ENCODE measurements at regions of chr3 and their contacts with region 1.

Region 1: GRCh38 chr3:194333212-194333980 is 17.7 kb downstream of the CPN2 start:
- DNase-seq: peak; percentile 77 to 87 (median 84)
- H3K4me3 ChIP-seq: peak overlapping the region in 1 of 2 donors; percentile 38
- H3K4me3 Mint-ChIP-seq: peak overlapping the region; percentile 35 to 75 (median 64)
- H3K27ac ChIP-seq: no peak overlapping the region
- H3K27ac Mint-ChIP-seq: no peak overlapping the region
- H3K4me1 ChIP-seq: peaks cover 6% of the 10 kb centered on the region
- H3K4me1 Mint-ChIP-seq: peaks cover 0 to 4% (median 2%) of the 10 kb centered on the region in 4 donors
- H3K27me3 ChIP-seq: peaks cover 12% of the 10 kb centered on the region
- H3K27me3 Mint-ChIP-seq: peaks cover 14 to 30% of the 10 kb centered on the region in 2 donors

Region 2: DNA sequence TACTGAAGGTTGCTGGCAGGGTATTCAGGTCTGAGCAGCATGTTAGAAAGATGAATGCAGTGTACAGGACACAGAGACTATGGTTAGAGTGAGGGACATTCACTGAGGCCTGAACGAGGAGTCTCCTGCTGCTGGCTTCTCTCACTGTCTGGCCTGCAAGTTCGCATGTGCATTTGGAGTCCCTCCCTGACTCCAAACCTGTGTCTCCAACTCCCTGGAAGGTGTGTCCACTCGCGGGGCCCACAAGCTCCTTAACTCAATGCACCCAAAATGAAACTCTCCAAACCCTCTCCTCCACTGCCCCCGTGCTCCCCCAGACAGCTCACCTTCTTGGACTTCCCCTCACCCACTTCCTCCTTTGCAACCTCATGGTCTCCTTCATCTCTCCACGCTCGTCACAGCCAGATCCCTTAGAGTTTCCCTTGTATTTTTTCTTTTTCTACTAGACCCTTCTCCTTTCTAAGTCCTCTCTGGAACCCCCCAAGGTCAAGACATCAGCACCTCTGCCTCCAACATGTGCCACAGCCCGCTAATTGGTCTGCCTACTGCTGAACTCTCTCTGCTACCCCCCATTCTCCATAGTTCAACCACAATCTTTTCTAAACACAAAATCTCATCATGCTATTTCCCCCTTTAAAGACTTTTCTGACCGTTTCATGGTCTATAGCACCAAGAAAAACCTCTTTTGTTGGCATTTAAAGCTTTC is 139.2 kb before region 1 on chr3:
- CTCF ChIA-PET with region 1: no interaction called
- POLR2A ChIA-PET with region 1: no interaction called
- intact Hi-C with region 1: no loop called
- DNase-seq: no peak
- H3K4me3 ChIP-seq: no peak overlapping the region
- H3K4me3 Mint-ChIP-seq: peak overlapping the region in 1 of 8 donors; percentile 29
- H3K27ac ChIP-seq: no peak overlapping the region
- H3K27ac Mint-ChIP-seq: peak overlapping the region in 1 of 7 donors; percentile 77
- H3K4me1 ChIP-seq: no peaks in the 10 kb centered on the region
- H3K4me1 Mint-ChIP-seq: peaks cover 4 to 8% (median 6%) of the 10 kb centered on the region in 4 donors
- H3K27me3 ChIP-seq: no peaks in the 10 kb centered on the region
- H3K27me3 Mint-ChIP-seq: peaks cover 6 to 13% of the 10 kb centered on the region in 2 donors

Region 3: DNA sequence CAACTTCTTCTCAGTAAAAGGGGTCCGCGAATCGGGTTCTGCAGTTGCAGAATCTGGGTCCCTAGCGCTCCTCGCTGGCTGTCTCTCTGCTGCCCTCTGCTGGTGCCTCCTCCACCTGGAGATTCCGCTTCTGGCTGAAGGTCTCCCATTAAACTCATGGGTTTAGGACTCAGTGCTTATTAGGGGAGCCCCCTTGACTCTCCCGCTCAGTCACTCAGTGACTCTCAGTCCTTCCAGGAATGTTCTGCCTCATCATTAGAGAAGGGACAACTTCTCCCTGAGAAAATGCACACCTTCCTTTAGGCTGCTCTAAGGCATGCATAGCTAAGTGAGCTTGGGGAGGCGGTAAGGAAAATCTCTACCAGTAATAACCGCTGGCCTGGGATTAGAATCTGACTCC is 10.6 kb after region 1 on chr3:
- CTCF ChIA-PET with region 1: interaction called, 92 read pairs
- POLR2A ChIA-PET with region 1: interaction called, 4 read pairs
- intact Hi-C with region 1: loop called (anchors 1 kb)
- DNase-seq: peak; percentile 56 to 63 (median 59)
- H3K4me3 ChIP-seq: no peak overlapping the region
- H3K4me3 Mint-ChIP-seq: peak overlapping the region in 1 of 8 donors; percentile 48
- H3K27ac ChIP-seq: no peak overlapping the region
- H3K27ac Mint-ChIP-seq: no peak overlapping the region
- H3K4me1 ChIP-seq: no peaks in the 10 kb centered on the region
- H3K4me1 Mint-ChIP-seq: no peaks in the 10 kb centered on the region
- H3K27me3 ChIP-seq: no peaks in the 10 kb centered on the region
- H3K27me3 Mint-ChIP-seq: peaks cover 1 to 7% of the 10 kb centered on the region in 2 donors

Region 4: DNA sequence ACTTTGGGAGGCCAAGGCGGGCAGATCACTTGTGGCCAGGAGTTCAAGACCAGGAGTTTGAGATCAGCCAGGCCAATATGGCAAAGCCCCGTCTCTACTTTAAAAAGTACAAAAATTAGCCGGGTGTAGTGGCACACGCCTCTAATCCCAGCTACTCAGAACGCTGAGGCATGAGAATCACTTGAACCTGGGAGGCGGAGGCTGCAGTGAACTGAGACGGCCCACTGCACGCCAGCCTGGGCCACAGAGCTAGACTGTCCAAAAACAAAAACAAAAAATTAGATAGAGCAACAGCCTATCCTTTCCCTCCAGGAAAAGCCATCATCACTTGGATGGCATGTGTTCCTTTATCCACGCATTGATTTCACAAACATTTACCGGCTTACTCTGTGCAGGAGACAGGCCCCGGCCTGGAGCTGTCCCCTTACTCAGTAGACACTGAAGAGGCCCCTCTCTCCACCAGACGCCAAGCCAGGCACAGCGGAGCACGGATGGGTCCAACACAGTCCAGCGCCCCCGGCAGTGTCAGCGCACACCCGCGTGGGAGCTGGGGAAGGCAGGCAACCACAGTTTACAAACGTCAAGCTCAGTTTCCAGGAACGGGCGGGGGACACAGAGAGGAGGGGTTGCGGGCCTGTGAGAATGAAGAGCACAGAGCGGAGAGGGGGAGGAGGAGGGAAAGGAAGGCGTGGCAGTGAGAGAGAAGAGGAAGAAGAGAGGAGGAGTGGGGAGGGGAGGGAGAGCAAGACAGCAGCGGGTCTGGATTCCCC is 62.6 kb after region 1 on chr3:
- CTCF ChIA-PET with region 1: interaction called, 26 read pairs
- POLR2A ChIA-PET with region 1: interaction called, 3 read pairs
- intact Hi-C with region 1: no loop called
- DNase-seq: peak; percentile 34 to 72 (median 45)
- H3K4me3 ChIP-seq: peak overlapping the region in 1 of 2 donors; percentile 74
- H3K4me3 Mint-ChIP-seq: peak overlapping the region; percentile 74 to 88 (median 80)
- H3K27ac ChIP-seq: no peak overlapping the region
- H3K27ac Mint-ChIP-seq: peak overlapping the region; percentile 38 to 87 (median 78)
- H3K4me1 ChIP-seq: peaks cover 41% of the 10 kb centered on the region
- H3K4me1 Mint-ChIP-seq: peaks cover 18 to 49% (median 40%) of the 10 kb centered on the region in 4 donors
- H3K27me3 ChIP-seq: no peaks in the 10 kb centered on the region
- H3K27me3 Mint-ChIP-seq: peaks cover 10 to 11% of the 10 kb centered on the region in 2 donors

Region 5: DNA sequence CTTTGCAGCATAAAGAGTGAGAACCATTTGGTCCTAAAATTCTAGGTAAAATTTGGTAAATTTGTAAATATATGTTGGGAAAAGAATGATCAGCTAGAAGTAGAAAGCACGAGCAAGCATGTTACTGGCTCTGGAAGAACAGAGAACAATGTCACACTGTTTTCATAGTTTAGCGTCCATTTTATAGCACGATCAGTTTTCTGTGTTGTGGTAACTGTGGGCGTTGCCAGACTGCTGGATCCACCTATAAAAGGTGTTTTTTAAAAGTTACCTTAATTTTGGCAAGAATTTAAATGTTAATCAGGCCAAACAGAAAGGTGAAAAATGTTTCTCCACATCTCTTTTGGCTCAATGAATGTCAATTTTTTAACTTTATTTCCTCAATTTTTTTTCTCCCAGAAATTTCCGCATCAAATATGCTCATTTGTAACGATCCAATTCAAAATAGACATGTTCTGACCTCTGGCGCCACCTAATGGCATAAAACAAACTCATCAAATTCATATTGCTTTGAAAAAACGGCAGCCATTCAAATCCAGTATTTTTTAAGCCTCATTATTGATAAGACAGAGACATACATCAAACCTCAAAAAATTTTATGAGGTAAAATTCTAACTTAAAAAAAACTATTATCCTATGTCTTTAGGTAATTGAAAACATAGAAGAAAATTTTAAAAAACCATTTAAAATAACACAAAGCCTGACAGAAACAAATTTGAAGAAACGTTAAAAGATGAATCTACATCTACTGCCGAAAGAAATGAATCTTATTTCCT is 71.2 kb after region 1 on chr3:
- CTCF ChIA-PET with region 1: interaction called, 100 read pairs
- POLR2A ChIA-PET with region 1: no interaction called
- intact Hi-C with region 1: loop called (anchors 1 kb)
- DNase-seq: peak; percentile 42 to 61 (median 56)
- H3K4me3 ChIP-seq: no peak overlapping the region
- H3K4me3 Mint-ChIP-seq: peak overlapping the region in 2 of 8 donors; percentile 43 to 75
- H3K27ac ChIP-seq: no peak overlapping the region
- H3K27ac Mint-ChIP-seq: peak overlapping the region in 2 of 7 donors; percentile 1 to 14
- H3K4me1 ChIP-seq: peaks cover 9% of the 10 kb centered on the region
- H3K4me1 Mint-ChIP-seq: peaks cover under 1 to 14% (median 7%) of the 10 kb centered on the region in 4 donors
- H3K27me3 ChIP-seq: no peaks in the 10 kb centered on the region
- H3K27me3 Mint-ChIP-seq: peaks cover 0 to 2% of the 10 kb centered on the region in 2 donors

Region 6: GRCh38 chr3:194592798-194593752 is 259.7 kb after region 1 on chr3:
- CTCF ChIA-PET with region 1: no interaction called
- POLR2A ChIA-PET with region 1: no interaction called
- intact Hi-C with region 1: loop called (anchors 1 kb)
- DNase-seq: no peak
- H3K4me3 ChIP-seq: no peak overlapping the region
- H3K4me3 Mint-ChIP-seq: no peak overlapping the region
- H3K27ac ChIP-seq: no peak overlapping the region
- H3K27ac Mint-ChIP-seq: no peak overlapping the region
- H3K4me1 ChIP-seq: no peaks in the 10 kb centered on the region
- H3K4me1 Mint-ChIP-seq: peaks cover 0 to 6% (median 2%) of the 10 kb centered on the region in 4 donors
- H3K27me3 ChIP-seq: no peaks in the 10 kb centered on the region
- H3K27me3 Mint-ChIP-seq: no peaks in the 10 kb centered on the region

Measured in CD4-positive, alpha-beta memory T cell (primary cell).